ENCODE measurements at regions of chr11 and their contacts with region 1.

Region 1: GRCh38 chr11:18912883-18913282 is 26.3 kb downstream of the MRGPRX1 start:
- DNase-seq: no peak
- H3K4me3 ChIP-seq: no peak overlapping the region
- H3K27ac ChIP-seq: no peak overlapping the region
- H3K4me1 ChIP-seq: no peaks in the 10 kb centered on the region
- H3K27me3 ChIP-seq: no peaks in the 10 kb centered on the region
- CTCF ChIP-seq: no peak
- EP300 ChIP-seq: no peak
- POLR2A ChIP-seq: no peak

Region 2: GRCh38 chr11:18720091-18720807 is 192.6 kb before region 1 on chr11:
- intact Hi-C with region 1: no loop called
- DNase-seq: no peak
- H3K4me3 ChIP-seq: no peak overlapping the region
- H3K27ac ChIP-seq: peak overlapping the region; percentile 4 to 80
- H3K4me1 ChIP-seq: peaks cover 3% of the 10 kb centered on the region
- H3K27me3 ChIP-seq: no peaks in the 10 kb centered on the region
- CTCF ChIP-seq: no peak
- EP300 ChIP-seq: no peak
- POLR2A ChIP-seq: no peak

Region 3: GRCh38 chr11:18958221-18958910 is 45.5 kb after region 1 on chr11:
- intact Hi-C with region 1: loop called in 1 of 4 experiments (anchors 5 kb)
- DNase-seq: no peak
- H3K4me3 ChIP-seq: no peak overlapping the region
- H3K27ac ChIP-seq: no peak overlapping the region
- H3K4me1 ChIP-seq: no peaks in the 10 kb centered on the region
- H3K27me3 ChIP-seq: no peaks in the 10 kb centered on the region
- CTCF ChIP-seq: no peak
- EP300 ChIP-seq: no peak
- POLR2A ChIP-seq: no peak